ENCODE measurements at regions of chr4 and their contacts with region 1.

Region 1: DNA sequence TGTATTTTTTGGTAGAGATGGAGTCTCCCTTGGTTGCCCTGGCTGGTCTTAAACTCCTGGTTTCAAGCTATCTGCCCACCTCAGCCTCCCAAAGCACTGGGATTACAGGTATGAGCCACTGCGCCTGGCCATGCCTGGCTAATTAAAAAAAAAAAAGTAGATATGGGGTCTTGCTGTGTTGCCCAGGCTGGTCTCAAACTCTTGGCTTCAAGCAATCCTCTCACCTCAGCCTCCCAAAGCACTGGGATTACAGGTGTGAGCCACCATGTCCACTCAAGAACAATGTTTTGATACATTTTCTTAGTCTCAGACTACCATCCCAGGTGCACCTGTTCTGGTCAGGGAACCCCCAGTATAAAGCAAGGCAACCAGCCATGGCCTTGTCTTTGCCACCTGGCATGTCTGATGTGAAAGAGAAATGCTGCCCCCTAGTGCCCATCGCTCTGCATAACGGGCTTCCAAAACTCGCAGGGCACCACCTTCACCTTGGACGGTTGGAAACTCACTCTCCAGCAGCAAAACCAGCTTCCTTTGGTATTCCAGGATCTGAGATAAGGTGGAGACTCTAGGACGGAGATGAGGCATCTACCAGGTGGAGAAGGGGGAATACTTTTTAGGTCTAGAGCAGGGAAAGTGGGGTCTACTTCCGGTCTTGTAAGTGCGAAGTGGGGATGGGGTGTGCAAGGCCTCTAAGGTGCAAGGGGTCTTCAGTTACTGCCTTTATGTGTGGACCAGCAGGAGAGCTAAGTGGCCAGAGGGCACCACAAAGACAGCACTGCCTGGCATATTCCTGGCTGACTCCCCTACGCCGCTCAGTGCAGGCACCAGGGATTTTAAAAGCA is 47.7 kb upstream of the AFAP1 start:
- DNase-seq: peak; percentile 53 to 78 (median 62)
- H3K4me3 ChIP-seq: no peak overlapping the region
- H3K4me3 Mint-ChIP-seq: no peak overlapping the region
- H3K27ac ChIP-seq: no peak overlapping the region
- H3K27ac Mint-ChIP-seq: peak overlapping the region in 1 of 8 donors; percentile 68
- H3K4me1 ChIP-seq: peaks cover 4% of the 10 kb centered on the region
- H3K4me1 Mint-ChIP-seq: peaks cover 1 to 5% (median 4%) of the 10 kb centered on the region in 3 donors
- H3K27me3 ChIP-seq: no peaks in the 10 kb centered on the region
- H3K27me3 Mint-ChIP-seq: peaks cover 5% of the 10 kb centered on the region in 2 donors

Region 2: DNA sequence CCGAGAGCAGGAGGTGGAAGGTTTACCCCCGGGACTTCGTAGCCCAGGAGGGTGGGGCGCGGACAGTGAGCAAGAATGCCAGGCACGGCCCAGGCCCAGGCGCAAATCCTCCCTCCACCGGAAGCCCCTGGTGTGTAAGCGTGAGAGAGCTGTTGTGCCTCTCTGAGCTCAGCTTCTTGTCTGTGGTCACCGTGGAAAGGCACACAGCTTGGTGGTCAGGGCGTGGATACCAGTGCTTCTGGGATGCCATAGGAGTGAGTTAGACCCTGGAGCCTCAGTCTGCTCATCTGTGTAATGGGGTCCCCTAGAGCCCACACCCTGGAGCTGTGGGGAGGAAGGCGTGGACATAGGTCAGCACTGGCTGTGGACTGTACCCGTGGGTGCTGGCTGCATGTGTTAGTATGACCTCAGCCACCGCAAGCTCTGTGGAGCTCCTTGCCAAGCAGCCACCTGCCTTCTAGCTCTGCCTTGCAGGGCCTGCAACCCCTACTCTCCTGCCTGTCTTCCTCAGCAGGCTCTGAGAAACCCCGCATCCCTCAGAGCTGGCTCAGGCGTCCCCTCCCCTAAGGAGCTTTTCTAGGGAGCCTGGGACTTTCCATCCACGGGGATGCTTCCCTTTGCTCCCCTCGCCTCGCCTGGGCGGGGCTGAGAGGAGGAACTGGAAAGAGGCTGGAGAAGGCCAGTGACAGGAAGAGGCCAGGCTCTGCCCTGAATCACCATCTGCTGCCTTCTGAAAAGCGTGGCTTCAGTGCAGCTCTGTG is 19.7 kb before region 1 on chr4:
- CTCF ChIA-PET with region 1: interaction called, 10 read pairs
- POLR2A ChIA-PET with region 1: no interaction called
- DNase-seq: no peak
- H3K4me3 ChIP-seq: no peak overlapping the region
- H3K4me3 Mint-ChIP-seq: peak overlapping the region in 5 of 7 donors; percentile 8 to 40 (median 19)
- H3K27ac ChIP-seq: no peak overlapping the region
- H3K27ac Mint-ChIP-seq: peak overlapping the region; percentile 29 to 82 (median 69)
- H3K4me1 ChIP-seq: peaks cover 69% of the 10 kb centered on the region
- H3K4me1 Mint-ChIP-seq: peaks cover 60 to 81% (median 75%) of the 10 kb centered on the region in 3 donors
- H3K27me3 ChIP-seq: no peaks in the 10 kb centered on the region
- H3K27me3 Mint-ChIP-seq: no peaks in the 10 kb centered on the region